K562 (cell line): ENCODE measurements at regions of chrX and their contacts with region 1.

Region 1: DNA sequence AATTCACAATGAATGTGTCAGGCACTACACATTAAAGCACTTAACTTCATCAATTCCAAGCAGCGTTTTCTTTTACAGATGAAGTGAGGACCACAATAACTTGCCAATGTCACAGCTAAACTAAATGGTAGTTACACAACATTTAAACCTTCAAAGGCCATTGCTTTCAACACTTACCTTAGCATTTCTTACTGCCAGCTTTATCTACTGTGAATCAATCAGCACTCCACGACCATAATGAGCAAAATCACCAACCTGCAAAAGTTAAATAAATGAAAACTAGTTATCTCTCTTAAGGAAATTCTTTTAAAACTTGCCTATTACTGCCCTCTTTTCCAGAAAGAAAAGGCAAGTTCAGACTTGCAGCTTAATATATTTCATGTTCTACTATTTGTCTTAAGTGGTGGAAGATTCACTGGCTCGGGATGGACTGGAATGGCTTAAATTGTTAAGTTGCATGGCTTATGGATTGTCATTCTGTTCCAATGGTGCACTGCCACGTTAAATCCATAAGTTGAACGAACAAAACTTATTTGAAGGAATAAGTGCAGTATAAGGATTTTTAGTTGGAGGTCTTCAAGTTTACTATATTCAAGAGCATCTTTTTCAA is 8.3 kb downstream of the RBMX start:
- DNase-seq: no peak
- ATAC-seq: no peak
- H3K4me3 ChIP-seq: no peak overlapping the region
- H3K27ac ChIP-seq: no peak overlapping the region; the same call in 1 of the 3 replicates
- H3K4me1 ChIP-seq: no peaks in the 10 kb centered on the region; a peak in 1 of 5 replicates
- H3K27me3 ChIP-seq: no peaks in the 10 kb centered on the region
- CTCF ChIP-seq: no peak
- EP300 ChIP-seq: no peak
- POLR2A ChIP-seq: peak; percentile 62
- RAD21 ChIP-seq: no peak

Region 2: GRCh38 chrX:136920001-136920400 is 47.8 kb after region 1 on chrX:
- CTCF ChIA-PET with region 1: no interaction called
- POLR2A ChIA-PET with region 1: interaction called, 4 read pairs
- in situ Hi-C with region 1: loop called (anchors 5 kb)
- intact Hi-C with region 1: loop called (anchors 2 kb)
- DNase-seq: no peak
- ATAC-seq: no peak
- H3K4me3 ChIP-seq: no peak overlapping the region
- H3K27ac ChIP-seq: no peak overlapping the region; the same call in 2 of the 3 replicates
- H3K4me1 ChIP-seq: no peaks in the 10 kb centered on the region; a peak in 1 of 5 replicates
- H3K27me3 ChIP-seq: no peaks in the 10 kb centered on the region
- CTCF ChIP-seq: no peak
- EP300 ChIP-seq: no peak
- POLR2A ChIP-seq: no peak
- RAD21 ChIP-seq: no peak